ENCODE measurements at regions of chr11 and their contacts with region 1.

Region 1: GRCh38 chr11:36702330-36703055 is 104.5 kb upstream of the RAG2 start:
- DNase-seq: no peak
- ATAC-seq: peak; percentile 87 to 94
- H3K4me3 ChIP-seq: no peak overlapping the region
- H3K27ac ChIP-seq: no peak overlapping the region
- H3K4me1 ChIP-seq: no peaks in the 10 kb centered on the region
- H3K27me3 ChIP-seq: no peaks in the 10 kb centered on the region
- CTCF ChIP-seq: peak; percentile 22 to 75 (median 60)
- POLR2A ChIP-seq: no peak

Region 2: GRCh38 chr11:36541001-36541400 is 161.5 kb before region 1 on chr11:
- in situ Hi-C with region 1: no loop called
- intact Hi-C with region 1: no loop called
- DNase-seq: peak; percentile 7 to 57
- ATAC-seq: peak; percentile 88 to 94
- H3K4me3 ChIP-seq: no peak overlapping the region
- H3K27ac ChIP-seq: peak overlapping the region in 1 of 4 donors; percentile 32
- H3K4me1 ChIP-seq: peaks cover 0 to 6% of the 10 kb centered on the region in 2 donors
- H3K27me3 ChIP-seq: no peaks in the 10 kb centered on the region
- CTCF ChIP-seq: peak in 4 of 5 experiments; percentile 15 to 36 (median 26)
- POLR2A ChIP-seq: no peak

Region 3: DNA sequence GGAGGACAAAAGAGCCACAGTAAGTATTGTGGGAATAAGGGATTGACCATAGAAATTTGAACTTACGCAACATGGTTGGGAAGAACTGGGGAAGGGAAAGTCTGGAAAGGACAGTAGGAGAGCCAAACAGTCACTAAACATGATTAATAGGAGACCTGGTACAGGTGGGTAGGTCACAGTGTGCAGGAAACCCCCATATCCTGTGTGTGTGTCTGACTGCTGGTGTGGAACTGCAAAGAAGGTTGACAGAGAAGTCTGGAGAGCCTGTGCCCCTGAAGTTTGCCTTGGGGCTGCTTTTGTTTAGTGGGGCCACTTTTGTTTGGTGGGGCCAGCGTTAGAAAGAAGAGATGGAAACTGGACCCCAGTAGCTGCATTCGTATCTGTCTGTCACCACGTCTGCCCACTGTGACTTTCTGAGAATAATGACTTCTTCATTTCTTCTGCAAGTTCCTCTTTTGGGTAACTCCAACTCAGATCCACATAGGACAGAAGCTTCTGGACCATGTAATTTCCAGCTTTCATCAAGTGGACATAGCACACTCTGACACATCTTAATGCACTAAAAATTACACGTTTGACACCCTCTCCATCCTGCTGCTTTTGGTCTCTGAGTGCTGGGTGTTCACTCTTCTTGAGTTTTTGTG is 22.4 kb after region 1 on chr11:
- in situ Hi-C with region 1: no loop called
- intact Hi-C with region 1: loop called (anchors 1 kb)
- DNase-seq: no peak
- ATAC-seq: no peak
- H3K4me3 ChIP-seq: no peak overlapping the region
- H3K27ac ChIP-seq: no peak overlapping the region
- H3K4me1 ChIP-seq: no peaks in the 10 kb centered on the region
- H3K27me3 ChIP-seq: no peaks in the 10 kb centered on the region
- CTCF ChIP-seq: no peak
- POLR2A ChIP-seq: no peak

Region 4: GRCh38 chr11:36746886-36747710 is 44.6 kb after region 1 on chr11:
- in situ Hi-C with region 1: loop called in 1 of 4 experiments (anchors 5 kb)
- intact Hi-C with region 1: loop called (anchors 1 kb)
- DNase-seq: peak; percentile 67 to 75
- ATAC-seq: peak; percentile 94 to 100
- H3K4me3 ChIP-seq: no peak overlapping the region
- H3K27ac ChIP-seq: no peak overlapping the region
- H3K4me1 ChIP-seq: no peaks in the 10 kb centered on the region
- H3K27me3 ChIP-seq: no peaks in the 10 kb centered on the region
- CTCF ChIP-seq: peak; percentile 67 to 93 (median 87)
- POLR2A ChIP-seq: no peak